ENCODE measurements at regions of chr2 and their contacts with region 1.

Region 1: DNA sequence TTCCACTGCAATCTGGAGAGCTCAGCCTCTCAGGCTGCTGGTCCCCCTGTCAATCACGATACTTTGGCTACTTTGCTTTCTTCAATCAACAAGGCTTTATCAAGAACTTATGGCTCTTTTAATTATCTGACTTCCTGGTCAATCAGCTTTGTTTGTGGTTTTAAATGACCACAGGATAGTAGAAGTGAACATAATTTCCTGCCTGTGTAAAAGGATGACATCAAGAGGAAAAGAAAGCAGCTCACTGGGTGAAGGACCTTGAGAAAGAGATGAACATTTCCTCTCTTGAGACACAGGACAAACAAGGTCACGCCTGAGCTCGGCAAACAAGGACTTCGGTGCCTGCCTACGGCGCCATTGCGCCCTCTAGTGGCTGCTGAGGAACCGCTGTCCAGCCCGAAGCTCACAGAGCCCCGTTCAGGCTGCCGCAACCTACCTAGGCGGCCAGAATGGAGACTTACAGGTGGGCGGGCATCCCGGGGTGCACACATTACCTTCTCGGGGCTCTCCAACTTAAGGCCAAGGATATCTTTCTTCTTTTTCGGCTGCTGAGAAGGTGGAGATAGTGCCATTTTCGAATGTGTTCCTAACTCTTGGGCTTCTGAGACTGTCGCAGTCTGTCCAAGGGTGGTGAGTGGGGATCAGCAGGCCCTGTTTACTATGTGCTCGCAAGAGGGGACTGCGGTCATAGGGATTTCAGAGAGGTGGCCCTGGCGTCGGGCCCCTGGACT is 54.0 kb downstream of the IL1RL2 start:
- DNase-seq: peak; percentile 96
- H3K4me3 Mint-ChIP-seq: peak overlapping the region; percentile 35
- H3K27ac Mint-ChIP-seq: peak overlapping the region; percentile 30
- H3K4me1 Mint-ChIP-seq: peaks cover 31% of the 10 kb centered on the region
- H3K27me3 Mint-ChIP-seq: no peaks in the 10 kb centered on the region

Region 2: GRCh38 chr2:101518578-101519492 is 722.0 kb before region 1 on chr2:
- intact Hi-C with region 1: no loop called
- DNase-seq: peak; percentile 43
- H3K4me3 Mint-ChIP-seq: no peak overlapping the region
- H3K27ac Mint-ChIP-seq: no peak overlapping the region
- H3K4me1 Mint-ChIP-seq: peaks cover 38% of the 10 kb centered on the region
- H3K27me3 Mint-ChIP-seq: no peaks in the 10 kb centered on the region

Region 3: DNA sequence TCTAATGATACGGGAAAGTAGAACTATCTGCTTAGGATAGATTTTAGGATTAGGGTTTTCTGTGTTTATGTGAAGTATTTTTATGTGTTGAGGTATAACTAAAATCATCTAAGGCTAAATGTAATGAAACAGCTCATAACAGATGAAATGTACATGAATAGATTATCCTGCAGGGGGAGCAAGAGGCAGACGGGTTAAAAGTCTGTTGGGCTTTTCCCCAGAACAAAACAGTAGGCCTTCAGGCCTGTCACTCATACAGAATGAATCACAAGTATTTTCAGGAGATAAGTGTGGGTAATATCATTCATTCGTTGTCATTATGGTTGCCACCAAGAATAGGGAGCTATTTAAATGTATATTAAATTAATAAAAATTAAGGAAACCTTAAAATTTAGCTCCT is 356.9 kb before region 1 on chr2:
- intact Hi-C with region 1: loop called (anchors 2 kb)
- DNase-seq: peak; percentile 72
- H3K4me3 Mint-ChIP-seq: no peak overlapping the region
- H3K27ac Mint-ChIP-seq: no peak overlapping the region
- H3K4me1 Mint-ChIP-seq: peaks cover 7% of the 10 kb centered on the region
- H3K27me3 Mint-ChIP-seq: no peaks in the 10 kb centered on the region

Region 4: DNA sequence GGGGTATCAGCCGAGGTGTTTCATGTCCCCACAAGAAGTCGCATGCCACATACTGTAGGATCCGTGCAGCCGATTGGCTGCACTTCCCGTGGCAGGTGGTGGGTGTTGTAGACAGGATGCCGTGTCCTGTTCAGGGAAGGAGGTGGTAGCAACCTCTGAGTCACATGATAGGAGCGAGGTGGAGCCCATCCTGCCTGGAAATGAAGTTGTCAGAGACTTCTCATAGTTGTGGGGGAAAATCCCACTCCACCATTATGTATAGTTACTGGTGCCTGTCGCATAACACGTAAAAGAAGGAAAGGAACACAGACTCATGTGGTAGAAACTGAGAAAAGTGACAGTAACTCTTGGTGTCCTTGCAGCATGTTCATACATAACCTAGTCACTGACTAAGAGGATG is 340.4 kb before region 1 on chr2:
- intact Hi-C with region 1: loop called (anchors 5 kb)
- DNase-seq: peak; percentile 63
- H3K4me3 Mint-ChIP-seq: no peak overlapping the region
- H3K27ac Mint-ChIP-seq: peak overlapping the region; percentile 60
- H3K4me1 Mint-ChIP-seq: peaks cover 10% of the 10 kb centered on the region
- H3K27me3 Mint-ChIP-seq: no peaks in the 10 kb centered on the region

Region 5: DNA sequence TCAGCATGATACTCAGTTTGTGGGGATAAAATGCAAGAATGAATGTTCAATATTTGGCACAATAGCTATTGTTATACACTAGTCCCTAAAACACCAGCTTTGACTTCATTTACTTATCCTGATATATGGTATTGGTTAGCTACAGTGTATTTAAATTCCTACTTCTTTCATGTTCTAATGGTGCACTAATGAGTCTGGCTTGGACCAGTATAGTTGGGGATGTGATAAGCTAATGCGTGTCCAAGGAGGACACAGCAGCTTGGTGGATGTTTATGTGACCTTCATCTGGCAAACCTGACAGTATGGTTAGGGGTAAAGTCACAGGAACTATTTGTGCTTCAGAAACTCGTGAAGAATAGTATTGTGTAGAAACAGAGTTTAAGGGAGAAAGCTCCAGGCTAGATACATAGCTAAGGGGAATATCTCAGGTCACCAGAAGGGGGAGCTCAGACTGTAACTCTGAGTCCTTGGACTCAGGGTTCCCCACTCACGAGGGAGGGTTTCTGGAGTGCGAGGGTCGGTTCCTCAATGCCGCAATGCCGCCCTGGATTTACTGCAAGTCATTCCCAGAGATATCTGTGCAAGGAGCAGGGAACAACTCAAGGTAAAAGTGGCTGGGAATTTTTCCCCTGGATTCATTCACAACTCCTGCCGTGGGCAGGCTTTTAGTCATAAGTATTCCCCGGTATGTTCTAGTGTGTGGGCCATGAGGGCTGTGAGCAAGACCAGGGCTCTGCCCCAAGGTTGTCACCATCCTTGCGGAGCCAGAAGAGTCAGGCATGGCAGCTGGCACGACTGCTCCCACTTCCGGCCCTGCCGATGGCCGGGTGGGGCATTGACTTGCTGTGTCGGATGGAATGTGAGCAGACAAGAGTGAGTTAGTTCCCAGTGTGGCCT is 234.6 kb before region 1 on chr2:
- intact Hi-C with region 1: loop called (anchors 2 kb)
- DNase-seq: peak; percentile 78
- H3K4me3 Mint-ChIP-seq: no peak overlapping the region
- H3K27ac Mint-ChIP-seq: no peak overlapping the region
- H3K4me1 Mint-ChIP-seq: peaks cover 10% of the 10 kb centered on the region
- H3K27me3 Mint-ChIP-seq: peaks cover 7% of the 10 kb centered on the region

Region 6: DNA sequence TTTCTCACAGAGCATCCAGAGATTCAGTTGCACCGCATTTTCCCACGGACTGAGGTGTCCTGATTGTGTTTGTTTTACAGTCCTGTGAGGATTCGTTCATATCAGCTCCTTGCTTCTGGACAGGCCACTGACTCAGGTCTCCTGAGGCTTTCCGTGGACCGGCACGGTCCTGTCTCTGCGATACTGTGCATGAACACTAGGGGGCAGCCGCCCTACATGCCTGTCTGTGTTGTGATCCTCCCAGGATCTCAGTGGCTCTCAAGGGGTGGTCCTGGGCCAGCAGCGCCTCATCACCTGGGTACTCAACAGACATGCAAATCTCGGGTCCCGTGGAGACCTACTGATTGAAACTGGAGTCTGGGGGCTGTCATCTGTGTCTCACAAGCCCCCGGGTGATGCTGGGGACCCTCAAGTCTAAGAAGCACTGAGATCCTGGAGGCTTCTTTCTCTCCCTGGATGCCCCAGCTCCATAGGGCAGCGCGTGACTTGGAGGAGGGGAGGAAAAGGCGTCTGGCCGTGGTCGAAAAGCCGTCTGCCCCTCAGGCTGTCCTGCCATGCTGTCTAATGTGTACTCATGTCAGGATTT is 220.1 kb before region 1 on chr2:
- intact Hi-C with region 1: loop called (anchors 1 kb)
- DNase-seq: peak; percentile 95
- H3K4me3 Mint-ChIP-seq: no peak overlapping the region
- H3K27ac Mint-ChIP-seq: no peak overlapping the region
- H3K4me1 Mint-ChIP-seq: peaks cover 6% of the 10 kb centered on the region
- H3K27me3 Mint-ChIP-seq: peaks cover 8% of the 10 kb centered on the region

Region 7: DNA sequence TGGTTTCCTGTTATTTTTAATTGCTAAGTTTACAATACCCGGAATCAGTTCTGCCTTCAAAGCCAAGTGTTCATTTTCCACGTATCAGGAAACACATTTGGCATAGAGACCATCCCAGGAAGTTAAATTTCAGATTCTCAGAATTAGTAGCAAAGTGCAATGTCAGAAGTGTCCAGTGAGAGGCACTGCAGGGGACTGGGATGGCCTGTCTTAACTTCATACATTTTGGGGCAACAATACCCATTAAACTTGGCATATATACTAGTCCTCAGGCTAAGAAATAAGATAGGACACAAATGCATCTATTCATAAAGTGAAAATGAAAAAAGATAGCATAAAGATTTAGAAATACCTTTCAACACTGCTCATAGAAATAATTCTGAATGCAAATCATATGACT is 55.5 kb before region 1 on chr2:
- intact Hi-C with region 1: loop called (anchors 2 kb)
- DNase-seq: peak; percentile 64
- H3K4me3 Mint-ChIP-seq: no peak overlapping the region
- H3K27ac Mint-ChIP-seq: no peak overlapping the region
- H3K4me1 Mint-ChIP-seq: peaks cover 8% of the 10 kb centered on the region
- H3K27me3 Mint-ChIP-seq: peaks cover 30% of the 10 kb centered on the region

Region 8: GRCh38 chr2:102449370-102449974 is 208.7 kb after region 1 on chr2:
- intact Hi-C with region 1: loop called (anchors 1 kb)
- DNase-seq: peak; percentile 91
- H3K4me3 Mint-ChIP-seq: no peak overlapping the region
- H3K27ac Mint-ChIP-seq: no peak overlapping the region
- H3K4me1 Mint-ChIP-seq: peaks cover 12% of the 10 kb centered on the region
- H3K27me3 Mint-ChIP-seq: no peaks in the 10 kb centered on the region